ENCODE measurements at regions of chr12 and their contacts with region 1.

Region 1: GRCh38 chr12:75814851-75815754 is 216.5 kb downstream of the PHLDA1 start:
- DNase-seq: peak; percentile 98
- ATAC-seq: peak; percentile 77
- H3K4me3 ChIP-seq: no peak overlapping the region
- H3K27ac ChIP-seq: peak overlapping the region; percentile 79
- H3K4me1 ChIP-seq: peaks cover 32% of the 10 kb centered on the region
- H3K27me3 ChIP-seq: no peaks in the 10 kb centered on the region
- CTCF ChIP-seq: no peak
- POLR2A ChIP-seq: peak; percentile 3; the same call in 1 of the 2 replicates
- RAD21 ChIP-seq: peak; percentile 36

Region 2: DNA sequence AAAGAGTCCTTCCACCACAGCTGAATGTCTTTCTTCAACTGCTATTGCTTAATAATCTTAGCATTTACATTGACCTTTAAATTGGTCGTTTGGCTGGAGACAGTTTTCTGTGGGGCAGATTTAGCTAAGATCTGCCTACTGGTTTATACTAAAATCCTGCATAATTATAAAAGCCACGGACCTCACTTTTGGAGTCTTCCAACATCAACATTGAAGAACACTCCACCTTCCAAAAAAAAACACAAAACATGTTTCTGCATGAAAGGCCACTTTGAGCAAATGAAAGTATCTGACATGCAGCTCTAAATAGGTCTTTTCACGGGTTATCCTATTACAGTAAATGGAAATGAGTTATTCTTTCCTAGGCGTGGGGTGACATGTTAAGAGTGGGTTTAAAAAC is 246.7 kb before region 1 on chr12:
- CTCF ChIA-PET with region 1: no interaction called
- POLR2A ChIA-PET with region 1: no interaction called
- dilution Hi-C with region 1: no loop called
- in situ Hi-C with region 1: no loop called
- intact Hi-C with region 1: loop called (anchors 5 kb)
- DNase-seq: peak; percentile 26
- ATAC-seq: peak; percentile 41
- H3K4me3 ChIP-seq: no peak overlapping the region
- H3K27ac ChIP-seq: peak overlapping the region; percentile 94
- H3K4me1 ChIP-seq: peaks cover 25% of the 10 kb centered on the region
- H3K27me3 ChIP-seq: no peaks in the 10 kb centered on the region
- CTCF ChIP-seq: no peak
- POLR2A ChIP-seq: no peak
- RAD21 ChIP-seq: no peak

Region 3: DNA sequence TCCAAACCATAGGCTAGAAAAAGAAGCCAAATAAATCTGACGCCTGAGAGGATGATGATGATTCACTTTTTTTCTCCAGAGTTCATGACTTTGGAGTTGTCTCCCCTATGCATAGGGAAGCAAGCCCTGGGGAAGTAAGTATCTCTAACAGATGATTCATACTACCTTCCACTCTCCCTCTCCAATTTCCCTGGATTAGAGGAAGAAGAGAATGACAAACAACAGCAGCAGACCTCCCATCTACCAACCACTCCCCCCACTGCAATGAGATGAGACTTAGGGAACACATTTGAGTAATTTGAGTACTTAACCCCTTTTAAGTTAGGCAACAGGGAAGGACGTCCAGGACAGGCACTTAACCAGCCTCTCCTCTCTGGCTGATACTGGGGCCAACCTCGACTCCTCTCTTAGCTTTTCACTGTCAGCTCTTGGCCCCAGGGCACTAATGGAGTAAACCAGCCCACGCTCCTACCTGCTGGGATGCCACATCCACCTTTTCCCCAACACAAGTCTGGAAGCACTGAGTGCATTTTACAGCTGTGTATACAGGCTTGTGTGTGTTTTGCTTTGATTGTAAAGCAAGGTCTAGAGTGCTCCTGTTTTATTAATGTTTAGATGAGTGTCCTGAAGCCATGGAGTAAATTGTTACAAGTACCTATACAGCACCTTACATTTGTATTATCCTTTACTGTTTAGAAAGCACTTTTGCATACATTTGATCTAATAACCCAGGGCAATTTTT is 35.8 kb after region 1 on chr12:
- CTCF ChIA-PET with region 1: no interaction called
- POLR2A ChIA-PET with region 1: no interaction called
- dilution Hi-C with region 1: no loop called
- in situ Hi-C with region 1: no loop called
- intact Hi-C with region 1: loop called (anchors 1 kb)
- DNase-seq: peak; percentile 84
- ATAC-seq: peak; percentile 88
- H3K4me3 ChIP-seq: no peak overlapping the region
- H3K27ac ChIP-seq: peak overlapping the region; percentile 81
- H3K4me1 ChIP-seq: peaks cover 15% of the 10 kb centered on the region
- H3K27me3 ChIP-seq: no peaks in the 10 kb centered on the region
- CTCF ChIP-seq: no peak
- POLR2A ChIP-seq: no peak
- RAD21 ChIP-seq: no peak

Region 4: GRCh38 chr12:75877763-75878621 is 62.9 kb after region 1 on chr12:
- CTCF ChIA-PET with region 1: no interaction called
- POLR2A ChIA-PET with region 1: no interaction called
- dilution Hi-C with region 1: no loop called
- in situ Hi-C with region 1: no loop called
- intact Hi-C with region 1: no loop called
- DNase-seq: peak; percentile 93
- ATAC-seq: peak; percentile 60
- H3K4me3 ChIP-seq: no peak overlapping the region
- H3K27ac ChIP-seq: peak overlapping the region; percentile 95
- H3K4me1 ChIP-seq: peaks cover 7% of the 10 kb centered on the region
- H3K27me3 ChIP-seq: no peaks in the 10 kb centered on the region
- CTCF ChIP-seq: no peak
- POLR2A ChIP-seq: no peak
- RAD21 ChIP-seq: 0 out of 2 replicates have a peak, but pooled peaks have one; percentile 7

Region 5: GRCh38 chr12:75954041-75954440 is 138.9 kb after region 1 on chr12:
- CTCF ChIA-PET with region 1: no interaction called
- POLR2A ChIA-PET with region 1: no interaction called
- dilution Hi-C with region 1: no loop called
- in situ Hi-C with region 1: no loop called
- intact Hi-C with region 1: loop called (anchors 5 kb)
- DNase-seq: peak; percentile 97
- ATAC-seq: peak; percentile 81
- H3K4me3 ChIP-seq: no peak overlapping the region
- H3K27ac ChIP-seq: peak overlapping the region; percentile 91
- H3K4me1 ChIP-seq: peaks cover 18% of the 10 kb centered on the region
- H3K27me3 ChIP-seq: no peaks in the 10 kb centered on the region
- CTCF ChIP-seq: no peak
- POLR2A ChIP-seq: no peak
- RAD21 ChIP-seq: peak; percentile 21; the same call in 1 of the 2 replicates

Region 6: DNA sequence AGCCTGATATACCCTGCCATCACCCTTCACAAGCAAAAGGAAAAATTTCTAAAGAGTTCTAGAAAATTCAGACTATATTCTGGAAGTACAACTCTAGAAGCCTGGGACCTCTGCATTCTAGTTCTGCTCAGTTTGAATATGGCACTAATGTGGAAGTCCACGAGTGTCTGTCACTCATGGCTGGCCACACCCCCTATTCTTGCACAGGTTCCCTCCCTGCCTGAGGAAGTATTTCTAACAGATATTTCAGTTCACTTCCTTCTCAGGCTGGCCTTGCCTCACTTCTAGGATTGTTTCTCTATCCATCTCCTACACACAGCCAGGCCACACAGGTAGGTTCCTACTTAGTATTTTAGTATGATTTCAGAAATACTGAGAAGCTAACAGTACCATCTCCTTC is 149.0 kb after region 1 on chr12:
- CTCF ChIA-PET with region 1: no interaction called
- POLR2A ChIA-PET with region 1: no interaction called
- dilution Hi-C with region 1: no loop called
- in situ Hi-C with region 1: no loop called
- intact Hi-C with region 1: no loop called
- DNase-seq: no peak
- ATAC-seq: no peak
- H3K4me3 ChIP-seq: no peak overlapping the region
- H3K27ac ChIP-seq: no peak overlapping the region
- H3K4me1 ChIP-seq: peaks cover 8% of the 10 kb centered on the region
- H3K27me3 ChIP-seq: no peaks in the 10 kb centered on the region
- CTCF ChIP-seq: no peak
- POLR2A ChIP-seq: no peak
- RAD21 ChIP-seq: no peak

Measured in IMR-90 (cell line).